B cell (primary cell): ENCODE measurements at regions of chr21 and their contacts with region 1.

Region 1: DNA sequence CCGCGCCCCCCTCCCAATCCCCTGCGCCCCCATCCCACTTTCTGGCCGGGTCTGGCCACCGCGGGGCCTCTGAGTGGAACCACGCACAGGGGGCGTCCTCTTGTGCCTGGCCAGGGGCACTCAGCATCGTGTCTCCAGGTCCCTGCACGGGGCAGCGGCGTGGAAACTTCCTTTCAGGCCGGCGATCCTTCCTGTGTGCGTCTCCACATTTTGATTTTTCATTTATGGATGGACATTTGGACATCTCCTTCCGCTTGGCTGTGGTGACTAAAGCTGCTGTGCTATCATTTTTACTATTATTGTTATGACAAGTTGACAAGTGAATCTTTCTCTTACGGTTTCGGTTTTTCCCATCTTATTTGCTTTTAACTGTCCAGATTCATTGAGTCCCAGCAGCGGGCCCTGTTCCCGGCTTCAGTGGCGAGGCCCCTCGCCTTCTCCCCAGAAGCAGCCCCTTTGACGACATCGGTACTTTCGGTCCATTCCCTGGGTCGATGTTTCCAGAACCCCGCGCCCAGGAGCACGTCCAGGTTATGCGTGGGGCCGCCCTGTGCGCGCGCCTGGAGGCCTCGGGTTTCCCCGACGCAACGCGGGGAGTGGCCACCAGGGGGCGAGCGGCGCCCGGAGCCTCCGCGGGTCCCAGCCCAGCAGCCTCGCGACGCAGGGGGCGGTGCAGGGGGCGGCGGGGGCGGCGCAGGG is 12.4 kb upstream of the SLC19A1 start:
- DNase-seq: peak; percentile 89
- ATAC-seq: peak; percentile 83
- H3K4me3 ChIP-seq: peak overlapping the region; percentile 75 to 93 (median 85)
- H3K4me3 Mint-ChIP-seq: peak overlapping the region; percentile 95
- H3K27ac ChIP-seq: peak overlapping the region; percentile 34 to 63
- H3K27ac Mint-ChIP-seq: peak overlapping the region; percentile 87
- H3K4me1 ChIP-seq: peaks cover 34 to 52% of the 10 kb centered on the region in 2 donors
- H3K4me1 Mint-ChIP-seq: peaks cover 38% of the 10 kb centered on the region
- H3K27me3 ChIP-seq: no peaks in the 10 kb centered on the region
- H3K27me3 Mint-ChIP-seq: no peaks in the 10 kb centered on the region
- CTCF ChIP-seq: peak; percentile 76

Region 2: GRCh38 chr21:45439161-45439872 is 115.3 kb before region 1 on chr21:
- CTCF ChIA-PET with region 1: no interaction called
- POLR2A ChIA-PET with region 1: no interaction called
- intact Hi-C with region 1: no loop called
- DNase-seq: peak; percentile 89
- ATAC-seq: peak; percentile 88
- H3K4me3 ChIP-seq: peak overlapping the region in 3 of 5 experiments; percentile 34 to 50 (median 39)
- H3K4me3 Mint-ChIP-seq: peak overlapping the region; percentile 66
- H3K27ac ChIP-seq: no peak overlapping the region
- H3K27ac Mint-ChIP-seq: peak overlapping the region; percentile 26
- H3K4me1 ChIP-seq: peaks cover 9 to 11% of the 10 kb centered on the region in 2 donors
- H3K4me1 Mint-ChIP-seq: peaks cover 6% of the 10 kb centered on the region
- H3K27me3 ChIP-seq: peaks cover 0 to 27% (median 2%) of the 10 kb centered on the region in 4 experiments
- H3K27me3 Mint-ChIP-seq: peaks cover 13% of the 10 kb centered on the region
- CTCF ChIP-seq: peak; percentile 96

Region 3: DNA sequence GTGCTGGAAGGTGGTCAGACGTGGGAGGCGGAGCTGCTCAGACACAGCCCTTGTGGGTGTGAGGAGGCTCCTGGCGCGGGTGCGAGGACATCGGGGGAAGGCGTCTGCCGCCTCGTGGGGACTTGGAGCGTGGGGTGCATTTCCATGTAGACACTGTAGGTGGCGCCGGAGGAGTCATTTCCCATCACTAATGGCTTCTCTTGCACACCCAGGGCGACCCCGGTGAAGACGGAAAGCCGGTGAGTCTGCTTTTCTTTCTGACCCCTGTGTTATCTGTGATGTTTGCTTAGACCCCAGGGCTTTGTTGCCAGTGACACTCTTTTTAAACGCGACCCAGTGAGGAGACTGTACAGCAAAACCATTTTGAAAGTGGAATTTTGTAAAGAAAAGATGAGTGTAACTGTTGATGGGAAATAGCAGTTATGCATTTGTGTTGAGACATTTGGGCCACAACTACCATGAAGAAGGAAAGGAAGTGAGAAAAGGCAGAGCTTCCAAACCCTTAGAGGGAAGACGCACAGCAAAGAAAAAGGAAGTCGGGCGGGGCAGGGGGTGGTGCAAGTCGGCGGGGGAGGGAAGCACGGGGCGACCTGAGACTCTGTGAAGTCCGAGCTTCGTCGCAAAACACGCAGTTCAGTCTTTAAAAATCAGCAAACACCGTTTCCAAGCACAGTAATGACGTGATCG is 76.4 kb before region 1 on chr21:
- CTCF ChIA-PET with region 1: interaction called, 3 read pairs
- POLR2A ChIA-PET with region 1: interaction called, 4 read pairs
- intact Hi-C with region 1: loop called (anchors 1 kb)
- DNase-seq: peak; percentile 85
- ATAC-seq: peak; percentile 83
- H3K4me3 ChIP-seq: peak overlapping the region; percentile 11 to 53 (median 45)
- H3K4me3 Mint-ChIP-seq: peak overlapping the region; percentile 78
- H3K27ac ChIP-seq: peak overlapping the region; percentile 54 to 76
- H3K27ac Mint-ChIP-seq: peak overlapping the region; percentile 78
- H3K4me1 ChIP-seq: peaks cover 28 to 43% of the 10 kb centered on the region in 2 donors
- H3K4me1 Mint-ChIP-seq: peaks cover 29% of the 10 kb centered on the region
- H3K27me3 ChIP-seq: no peaks in the 10 kb centered on the region
- H3K27me3 Mint-ChIP-seq: no peaks in the 10 kb centered on the region
- CTCF ChIP-seq: peak; percentile 91

Region 4: DNA sequence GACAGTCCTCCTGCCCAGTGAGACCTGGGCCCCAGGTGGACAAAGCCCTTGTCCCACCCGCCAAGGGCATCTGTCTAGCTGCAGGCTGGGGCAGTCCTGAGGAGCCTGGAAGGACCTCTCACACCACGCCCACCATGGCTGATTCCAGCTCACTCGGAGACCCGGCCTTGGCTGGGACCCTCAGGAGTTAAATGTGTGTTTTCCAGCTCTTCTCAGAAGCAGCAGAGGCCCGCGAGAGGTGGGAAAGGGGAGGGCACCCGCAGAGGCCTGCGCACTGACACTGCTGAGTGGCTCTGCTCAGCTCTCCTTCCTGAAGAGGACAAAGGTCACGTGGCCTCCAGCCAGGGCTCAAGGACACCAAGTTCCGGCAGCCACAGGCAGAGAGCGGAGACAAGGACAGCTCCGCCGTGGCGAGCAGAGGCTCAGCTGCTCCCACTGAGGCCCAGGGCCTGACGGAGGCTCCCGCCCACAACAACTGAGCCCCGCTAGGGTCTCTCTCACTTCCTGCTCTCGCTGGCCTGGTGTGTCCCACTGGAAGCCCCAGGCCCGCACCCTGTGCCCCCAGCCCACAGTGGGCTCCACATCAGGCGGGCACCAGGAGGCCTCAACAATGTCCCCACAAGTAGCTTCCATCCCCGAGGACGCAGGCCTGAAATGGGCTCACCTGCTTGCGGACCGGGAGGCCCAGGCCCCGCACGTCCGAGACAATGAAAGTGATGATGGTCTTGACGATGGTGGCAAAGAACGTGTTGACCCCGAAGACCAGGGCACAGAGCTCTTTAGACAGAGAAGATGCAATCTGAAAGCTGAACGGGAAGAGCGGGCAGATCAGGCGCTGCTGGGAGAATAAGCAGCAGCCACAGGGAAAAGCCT is 29.2 kb before region 1 on chr21:
- CTCF ChIA-PET with region 1: no interaction called
- POLR2A ChIA-PET with region 1: interaction called, 16 read pairs
- intact Hi-C with region 1: no loop called
- DNase-seq: no peak
- ATAC-seq: no peak
- H3K4me3 ChIP-seq: no peak overlapping the region
- H3K4me3 Mint-ChIP-seq: no peak overlapping the region
- H3K27ac ChIP-seq: no peak overlapping the region
- H3K27ac Mint-ChIP-seq: no peak overlapping the region
- H3K4me1 ChIP-seq: no peaks in the 10 kb centered on the region
- H3K4me1 Mint-ChIP-seq: no peaks in the 10 kb centered on the region
- H3K27me3 ChIP-seq: no peaks in the 10 kb centered on the region
- H3K27me3 Mint-ChIP-seq: no peaks in the 10 kb centered on the region
- CTCF ChIP-seq: no peak

Region 5: DNA sequence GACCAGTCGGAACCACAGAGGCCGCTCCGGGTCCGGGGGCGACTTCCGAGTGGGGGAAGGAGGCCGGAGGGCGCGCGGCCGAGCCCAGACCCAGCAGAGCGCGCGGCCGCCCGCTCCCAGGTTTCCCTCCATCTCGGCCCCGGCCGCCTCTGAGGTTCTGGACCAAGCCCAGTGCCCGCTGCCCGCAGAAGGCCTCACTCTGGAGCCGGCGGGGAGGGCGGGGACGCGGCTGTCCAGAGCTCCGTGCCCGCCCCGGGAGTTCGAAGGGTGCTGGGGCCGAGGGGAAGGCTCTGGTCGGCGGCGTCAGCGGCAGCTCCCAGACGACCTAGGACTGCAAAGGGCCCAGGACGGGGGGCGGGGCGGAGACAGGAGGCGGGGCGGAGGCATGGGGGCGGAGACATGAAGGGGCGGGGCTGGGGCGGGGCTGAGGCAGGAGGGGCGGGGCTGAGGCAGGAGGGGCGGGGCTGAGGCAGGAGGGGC is 35.7 kb after region 1 on chr21:
- CTCF ChIA-PET with region 1: interaction called, 33 read pairs
- POLR2A ChIA-PET with region 1: no interaction called
- intact Hi-C with region 1: loop called (anchors 1 kb)
- DNase-seq: peak; percentile 71
- ATAC-seq: peak; percentile 67
- H3K4me3 ChIP-seq: peak overlapping the region in 4 of 5 experiments; percentile 36 to 58 (median 51)
- H3K4me3 Mint-ChIP-seq: peak overlapping the region; percentile 27
- H3K27ac ChIP-seq: no peak overlapping the region
- H3K27ac Mint-ChIP-seq: no peak overlapping the region
- H3K4me1 ChIP-seq: peaks cover 25 to 30% of the 10 kb centered on the region in 2 donors
- H3K4me1 Mint-ChIP-seq: peaks cover 11% of the 10 kb centered on the region
- H3K27me3 ChIP-seq: peaks cover 0 to 32% (median 8%) of the 10 kb centered on the region in 4 experiments
- H3K27me3 Mint-ChIP-seq: peaks cover 44% of the 10 kb centered on the region
- CTCF ChIP-seq: no peak

Region 6: DNA sequence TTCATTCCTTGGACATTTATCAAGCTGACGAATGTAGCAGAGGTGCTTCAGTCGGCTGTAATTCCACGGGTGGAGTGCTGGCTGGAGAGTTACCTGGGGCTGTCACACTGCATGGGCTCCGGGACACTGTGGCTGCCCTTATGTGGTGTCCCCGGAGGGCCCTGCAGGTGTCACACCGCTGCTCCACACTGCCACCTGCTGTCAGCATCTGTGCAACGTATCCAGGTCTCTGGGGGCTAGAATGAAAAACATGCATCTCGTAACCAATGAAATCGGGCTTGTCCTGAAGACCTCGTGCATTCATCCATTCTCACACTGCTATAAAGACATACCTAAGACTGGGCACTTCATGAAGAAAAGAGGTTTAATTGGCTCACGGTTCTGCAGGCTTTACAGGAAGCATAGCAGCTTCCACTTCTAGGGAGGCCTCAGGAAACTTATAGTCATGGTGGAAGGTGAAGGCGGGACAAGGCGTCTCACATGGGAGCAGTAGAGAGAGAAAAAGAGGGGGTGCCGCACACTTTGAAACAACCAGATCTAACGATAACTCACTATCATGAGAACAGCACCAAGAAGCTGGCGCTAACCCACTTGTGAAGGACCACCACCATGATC is 42.2 kb after region 1 on chr21:
- CTCF ChIA-PET with region 1: interaction called, 33 read pairs
- POLR2A ChIA-PET with region 1: no interaction called
- intact Hi-C with region 1: loop called (anchors 1 kb)
- DNase-seq: peak; percentile 84
- ATAC-seq: peak; percentile 85
- H3K4me3 ChIP-seq: no peak overlapping the region
- H3K4me3 Mint-ChIP-seq: no peak overlapping the region
- H3K27ac ChIP-seq: no peak overlapping the region
- H3K27ac Mint-ChIP-seq: no peak overlapping the region
- H3K4me1 ChIP-seq: peaks cover 15 to 18% of the 10 kb centered on the region in 2 donors
- H3K4me1 Mint-ChIP-seq: peaks cover 17% of the 10 kb centered on the region
- H3K27me3 ChIP-seq: peaks cover 0 to 3% (median 0%) of the 10 kb centered on the region in 4 experiments
- H3K27me3 Mint-ChIP-seq: peaks cover 35% of the 10 kb centered on the region
- CTCF ChIP-seq: peak; percentile 92